ENCODE measurements at regions of chr14 and their contacts with region 1.

Region 1: DNA sequence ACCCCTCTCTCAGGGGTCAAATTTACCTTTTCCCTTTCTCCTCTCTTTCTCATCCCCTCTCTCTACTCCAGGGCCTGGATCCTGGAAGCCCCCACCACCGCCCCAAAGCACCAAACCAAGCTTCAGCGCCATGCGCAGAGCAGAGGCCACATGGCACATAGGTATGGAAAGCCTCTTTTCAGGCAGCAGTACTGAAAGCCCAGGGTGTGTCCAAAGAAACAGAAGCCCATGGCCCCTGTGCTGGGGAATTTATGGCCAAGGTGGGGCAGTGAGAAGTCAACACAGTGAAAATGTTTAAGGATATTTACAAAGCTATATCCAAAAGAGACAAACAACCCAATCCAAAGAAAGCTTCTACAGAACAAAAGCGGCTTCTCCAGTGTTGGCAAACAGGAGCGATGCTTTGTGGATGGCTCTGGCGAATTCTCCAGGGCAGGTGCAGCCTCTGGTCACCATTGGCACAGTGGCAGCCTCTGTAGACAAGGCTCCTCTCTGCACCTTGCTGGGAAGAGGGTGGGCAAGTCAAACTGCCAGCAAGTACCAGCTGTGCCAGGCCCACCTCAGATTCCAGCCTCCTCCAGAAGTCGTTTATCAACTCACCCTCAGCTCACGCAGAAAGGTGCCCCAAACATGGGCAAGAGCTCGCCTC is 4.7 kb upstream of the CPNE6 start:
- DNase-seq: no peak
- ATAC-seq: no peak

Region 2: GRCh38 chr14:24036169-24036962 is 30.3 kb before region 1 on chr14:
- intact Hi-C with region 1: loop called (anchors 1 kb)
- DNase-seq: peak; percentile 87
- ATAC-seq: peak; percentile 93

Region 3: DNA sequence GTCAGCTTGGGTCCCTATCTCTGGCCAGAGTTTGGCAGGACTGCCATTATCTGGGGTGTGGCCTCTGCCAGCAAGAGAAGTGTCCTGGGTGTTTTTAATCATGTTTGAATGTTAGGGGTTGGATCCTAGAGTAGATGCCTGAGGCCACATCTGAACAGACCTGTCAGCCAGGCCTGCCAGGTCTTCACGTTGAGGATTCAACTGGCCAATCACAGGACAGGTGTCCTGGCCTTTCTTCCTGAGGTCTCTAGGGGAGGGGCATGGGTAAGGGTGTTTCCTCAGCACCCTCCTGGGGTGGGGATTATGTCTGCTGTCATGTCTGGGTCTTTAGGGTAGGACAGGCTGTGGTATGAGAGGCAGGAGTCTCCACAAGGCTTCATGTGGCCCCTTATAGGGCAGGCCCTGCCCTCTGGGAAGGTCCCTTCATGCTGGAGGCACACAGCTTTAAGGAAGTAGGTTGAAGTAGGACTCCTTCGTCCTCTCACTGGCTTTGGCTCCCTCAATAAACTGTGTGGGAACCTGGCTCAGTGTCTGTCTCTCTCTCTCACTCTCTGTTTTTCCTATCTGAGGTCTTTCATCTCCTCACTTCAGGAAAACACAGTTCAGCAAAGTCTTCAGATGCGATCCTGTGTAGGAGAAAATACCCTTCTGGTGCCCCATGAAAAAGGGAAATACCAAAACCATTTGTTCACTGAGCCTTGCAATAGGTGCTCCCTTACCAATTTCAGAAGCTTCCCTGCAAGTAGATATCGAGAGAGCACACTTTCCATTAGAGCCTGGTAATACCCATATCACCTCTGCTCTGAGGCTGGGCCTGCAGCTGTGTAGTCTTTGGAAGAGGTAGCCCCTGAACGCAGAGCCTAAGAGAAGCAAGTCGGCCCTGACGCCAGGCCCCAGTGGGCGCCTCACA is 57.1 kb after region 1 on chr14:
- intact Hi-C with region 1: no loop called
- DNase-seq: no peak
- ATAC-seq: no peak

Region 4: GRCh38 chr14:24504425-24504950 is 437.9 kb after region 1 on chr14:
- intact Hi-C with region 1: no loop called
- DNase-seq: no peak
- ATAC-seq: no peak

Region 5: GRCh38 chr14:24542346-24542936 is 475.8 kb after region 1 on chr14:
- intact Hi-C with region 1: no loop called
- DNase-seq: no peak
- ATAC-seq: no peak

Measured in sciatic nerve (tissue), 2 donors.